ENCODE measurements at regions of chr4 and their contacts with region 1.

Region 1: GRCh38 chr4:140135529-140136088 is 18.4 kb downstream of the MAML3 start:
- DNase-seq: peak; percentile 76 to 91 (median 80)
- H3K4me3 ChIP-seq: no peak overlapping the region
- H3K27ac ChIP-seq: peak overlapping the region in 1 of 2 donors; percentile 46
- H3K4me1 ChIP-seq: peaks cover 30% of the 10 kb centered on the region
- H3K27me3 ChIP-seq: no peaks in the 10 kb centered on the region
- CTCF ChIP-seq: no peak
- EP300 ChIP-seq: no peak
- POLR2A ChIP-seq: no peak

Region 2: GRCh38 chr4:140085062-140085622 is 50.5 kb before region 1 on chr4:
- intact Hi-C with region 1: loop called in 1 of 4 experiments (anchors 10 kb)
- DNase-seq: no peak
- H3K4me3 ChIP-seq: no peak overlapping the region
- H3K27ac ChIP-seq: peak overlapping the region; percentile 27 to 60
- H3K4me1 ChIP-seq: peaks cover 19% of the 10 kb centered on the region
- H3K27me3 ChIP-seq: no peaks in the 10 kb centered on the region
- CTCF ChIP-seq: no peak
- EP300 ChIP-seq: no peak
- POLR2A ChIP-seq: no peak

Region 3: GRCh38 chr4:140195806-140196205 is 60.2 kb after region 1 on chr4:
- intact Hi-C with region 1: no loop called
- DNase-seq: no peak
- H3K4me3 ChIP-seq: no peak overlapping the region
- H3K27ac ChIP-seq: no peak overlapping the region
- H3K4me1 ChIP-seq: no peaks in the 10 kb centered on the region
- H3K27me3 ChIP-seq: no peaks in the 10 kb centered on the region
- CTCF ChIP-seq: no peak
- EP300 ChIP-seq: no peak
- POLR2A ChIP-seq: no peak

Region 4: DNA sequence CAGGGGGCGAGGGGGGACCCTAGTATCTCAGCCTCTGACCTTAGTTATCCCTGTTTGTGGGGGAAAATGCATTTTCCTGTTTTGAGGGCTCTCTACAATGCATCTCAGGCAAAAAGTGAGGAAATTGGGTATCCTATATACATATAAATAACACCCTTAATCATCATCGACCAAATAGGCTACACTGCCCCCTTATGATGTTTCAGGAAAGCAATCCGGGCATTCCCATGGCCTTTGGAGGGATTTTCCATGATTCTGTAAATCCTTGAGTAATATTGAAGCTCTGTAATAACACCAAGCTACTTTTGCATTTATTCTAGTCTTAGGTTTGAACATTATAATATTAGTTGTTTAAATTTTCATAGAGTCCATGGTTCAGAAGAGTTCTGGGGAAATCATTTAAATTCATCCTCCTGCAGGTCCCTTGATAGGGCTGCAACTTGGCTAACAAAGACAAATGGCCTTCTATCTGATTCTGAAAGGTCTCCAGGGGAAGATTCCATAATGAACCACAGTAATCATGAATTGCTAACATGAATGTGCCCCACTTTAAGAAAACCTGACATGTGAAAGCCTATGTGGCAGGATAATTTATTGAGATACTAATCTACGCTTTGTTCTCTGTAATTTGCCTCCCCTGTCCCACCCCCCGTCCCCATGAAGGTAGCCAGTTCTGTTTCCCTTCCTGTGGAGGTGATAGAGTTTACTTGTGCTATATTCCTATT is 146.4 kb after region 1 on chr4:
- intact Hi-C with region 1: no loop called
- DNase-seq: no peak
- H3K4me3 ChIP-seq: no peak overlapping the region
- H3K27ac ChIP-seq: no peak overlapping the region
- H3K4me1 ChIP-seq: peaks cover 7% of the 10 kb centered on the region
- H3K27me3 ChIP-seq: no peaks in the 10 kb centered on the region
- CTCF ChIP-seq: no peak
- EP300 ChIP-seq: no peak
- POLR2A ChIP-seq: no peak

Measured in ovary (tissue), 10 donors.